ENCODE measurements at regions of chr12 and their contacts with region 1.

Region 1: GRCh38 chr12:674272-674781 is 11.1 kb upstream of the NINJ2 start:
- DNase-seq: peak; percentile 92
- H3K4me3 Mint-ChIP-seq: peak overlapping the region; percentile 73
- H3K27ac Mint-ChIP-seq: peak overlapping the region; percentile 96
- H3K4me1 Mint-ChIP-seq: peaks cover 65% of the 10 kb centered on the region
- H3K27me3 Mint-ChIP-seq: no peaks in the 10 kb centered on the region

Region 2: DNA sequence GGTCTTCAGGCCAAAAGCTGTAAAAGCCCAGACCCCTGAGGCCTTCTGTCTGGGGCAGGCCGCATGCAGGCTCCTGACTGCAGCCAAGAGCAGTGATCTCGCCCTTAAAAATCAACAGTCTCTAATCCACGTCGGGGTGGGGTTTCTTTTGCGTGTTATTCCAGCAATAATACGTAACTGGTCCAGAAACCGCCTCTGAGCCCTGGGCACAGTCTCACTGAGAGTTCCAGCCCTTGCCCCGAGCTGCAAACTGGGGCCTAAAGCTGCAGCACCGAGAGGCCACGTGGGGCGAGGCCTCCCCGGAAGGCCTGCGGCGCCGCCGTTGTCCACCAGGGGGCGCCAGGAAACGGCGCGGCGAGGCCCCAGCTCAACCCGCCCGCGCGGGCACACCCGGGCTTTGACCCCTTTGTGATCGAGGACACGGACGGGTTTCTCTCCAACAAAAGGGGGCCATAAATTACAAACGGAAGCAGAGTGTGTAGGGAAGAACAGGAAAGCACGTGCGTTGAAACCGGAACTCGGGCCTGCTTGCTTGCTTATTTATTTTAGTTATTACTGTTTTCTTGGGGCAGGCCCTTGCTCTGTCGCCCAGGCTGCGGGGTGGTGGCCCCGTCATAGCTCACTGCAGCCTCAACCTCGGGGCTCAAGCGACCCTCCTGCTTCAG is 98.2 kb before region 1 on chr12:
- intact Hi-C with region 1: loop called (anchors 2 kb)
- DNase-seq: peak; percentile 97
- H3K4me3 Mint-ChIP-seq: peak overlapping the region; percentile 55
- H3K27ac Mint-ChIP-seq: peak overlapping the region; percentile 86
- H3K4me1 Mint-ChIP-seq: peaks cover 32% of the 10 kb centered on the region
- H3K27me3 Mint-ChIP-seq: no peaks in the 10 kb centered on the region

Region 3: GRCh38 chr12:642633-643474 is 31.5 kb before region 1 on chr12:
- intact Hi-C with region 1: loop called (anchors 1 kb)
- DNase-seq: peak; percentile 94
- H3K4me3 Mint-ChIP-seq: peak overlapping the region; percentile 86
- H3K27ac Mint-ChIP-seq: peak overlapping the region; percentile 92
- H3K4me1 Mint-ChIP-seq: peaks cover 57% of the 10 kb centered on the region
- H3K27me3 Mint-ChIP-seq: no peaks in the 10 kb centered on the region

Region 4: GRCh38 chr12:685388-685787 is 11.1 kb after region 1 on chr12:
- intact Hi-C with region 1: loop called (anchors 1 kb)
- DNase-seq: peak; percentile 95
- H3K4me3 Mint-ChIP-seq: peak overlapping the region; percentile 21
- H3K27ac Mint-ChIP-seq: peak overlapping the region; percentile 86
- H3K4me1 Mint-ChIP-seq: peaks cover 24% of the 10 kb centered on the region
- H3K27me3 Mint-ChIP-seq: no peaks in the 10 kb centered on the region

Region 5: DNA sequence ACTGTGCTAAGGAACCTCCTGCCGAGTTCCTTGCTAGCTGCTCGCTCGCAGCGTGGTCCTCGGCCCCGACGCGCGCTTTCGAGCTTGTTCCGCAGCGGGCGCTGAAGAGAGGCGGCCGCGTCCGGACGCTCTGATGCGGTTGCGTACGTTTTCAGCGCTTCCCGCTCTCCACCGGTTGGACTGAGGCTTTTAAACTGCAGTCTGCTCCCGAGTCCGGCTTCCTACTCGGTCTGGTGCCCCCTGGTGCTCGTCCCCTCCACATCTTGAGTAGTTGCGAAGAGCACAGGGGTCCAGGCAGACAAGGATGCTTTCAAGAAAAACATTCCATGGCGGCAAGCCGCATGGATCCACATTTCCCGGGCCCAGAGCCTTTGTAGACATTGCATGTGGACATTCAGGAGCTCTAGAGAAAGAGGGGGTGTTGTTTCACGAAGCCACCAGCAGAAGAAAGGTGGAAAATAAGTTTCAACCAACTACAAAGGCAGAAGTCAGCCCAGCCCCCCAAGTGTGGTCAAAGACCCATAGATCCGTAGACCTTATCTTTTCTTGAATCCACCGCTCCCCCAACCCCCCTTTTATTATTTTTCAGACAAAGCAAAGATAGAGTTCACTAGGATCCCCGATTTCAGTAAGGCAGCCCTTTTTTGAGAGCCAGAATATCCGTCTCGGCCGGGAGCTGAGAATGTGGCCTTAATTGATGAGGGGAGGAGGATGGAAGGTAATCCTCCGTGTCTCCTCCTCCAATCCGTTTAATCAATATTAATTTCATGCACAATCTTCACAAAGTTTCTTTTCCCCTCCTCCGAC is 77.1 kb after region 1 on chr12:
- intact Hi-C with region 1: loop called (anchors 1 kb)
- DNase-seq: peak; percentile 96
- H3K4me3 Mint-ChIP-seq: no peak overlapping the region
- H3K27ac Mint-ChIP-seq: no peak overlapping the region
- H3K4me1 Mint-ChIP-seq: peaks cover 21% of the 10 kb centered on the region
- H3K27me3 Mint-ChIP-seq: no peaks in the 10 kb centered on the region

Region 6: GRCh38 chr12:810671-811415 is 136.5 kb after region 1 on chr12:
- intact Hi-C with region 1: loop called (anchors 2 kb)
- DNase-seq: peak; percentile 74
- H3K4me3 Mint-ChIP-seq: no peak overlapping the region
- H3K27ac Mint-ChIP-seq: peak overlapping the region; percentile 57
- H3K4me1 Mint-ChIP-seq: peaks cover 41% of the 10 kb centered on the region
- H3K27me3 Mint-ChIP-seq: no peaks in the 10 kb centered on the region

Region 7: GRCh38 chr12:1949771-1950470 is 1275.6 kb after region 1 on chr12:
- intact Hi-C with region 1: no loop called
- DNase-seq: no peak
- H3K4me3 Mint-ChIP-seq: no peak overlapping the region
- H3K27ac Mint-ChIP-seq: no peak overlapping the region
- H3K4me1 Mint-ChIP-seq: no peaks in the 10 kb centered on the region
- H3K27me3 Mint-ChIP-seq: no peaks in the 10 kb centered on the region